ENCODE measurements at regions of chr1 and their contacts with region 1.

Region 1: DNA sequence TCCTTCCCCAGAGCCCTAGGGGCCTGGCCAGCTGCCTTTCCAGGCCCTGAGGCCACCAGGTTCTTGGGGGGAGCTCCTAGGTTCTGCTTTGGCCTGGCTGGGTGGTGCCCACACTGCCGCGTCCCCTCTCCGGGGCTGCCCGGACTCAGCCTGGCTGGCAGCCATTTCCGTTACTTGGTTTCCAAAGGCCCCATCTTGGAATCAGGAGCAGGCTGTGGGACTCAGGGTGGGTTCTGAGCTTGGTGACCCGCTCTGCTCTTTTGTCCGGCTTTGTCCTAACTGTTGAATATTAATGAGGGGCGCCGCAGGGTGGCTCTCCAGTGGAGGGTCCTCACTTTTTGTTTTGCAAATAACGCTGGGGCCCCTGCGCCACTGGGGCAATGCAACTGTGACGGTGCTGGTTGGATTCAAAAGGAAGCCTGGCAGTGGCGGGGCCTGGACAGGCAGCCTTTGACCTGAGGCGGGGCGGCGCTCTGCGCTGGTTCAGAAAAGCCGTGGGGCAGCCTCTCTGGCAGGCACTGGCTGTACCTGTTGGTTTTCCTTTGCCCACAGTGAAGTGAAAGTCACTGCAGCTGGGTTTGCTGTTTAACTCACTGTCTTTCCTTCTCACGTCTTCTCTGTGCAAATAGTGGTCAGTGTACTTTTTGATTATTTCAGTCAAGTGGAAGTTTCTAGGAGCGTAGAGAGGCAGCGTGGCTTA is 20.2 kb downstream of the SKI start:
- H3K4me3 Mint-ChIP-seq: no peak overlapping the region
- H3K27ac Mint-ChIP-seq: peak overlapping the region; percentile 13
- H3K4me1 Mint-ChIP-seq: peaks cover 94% of the 10 kb centered on the region
- H3K27me3 Mint-ChIP-seq: no peaks in the 10 kb centered on the region

Region 2: DNA sequence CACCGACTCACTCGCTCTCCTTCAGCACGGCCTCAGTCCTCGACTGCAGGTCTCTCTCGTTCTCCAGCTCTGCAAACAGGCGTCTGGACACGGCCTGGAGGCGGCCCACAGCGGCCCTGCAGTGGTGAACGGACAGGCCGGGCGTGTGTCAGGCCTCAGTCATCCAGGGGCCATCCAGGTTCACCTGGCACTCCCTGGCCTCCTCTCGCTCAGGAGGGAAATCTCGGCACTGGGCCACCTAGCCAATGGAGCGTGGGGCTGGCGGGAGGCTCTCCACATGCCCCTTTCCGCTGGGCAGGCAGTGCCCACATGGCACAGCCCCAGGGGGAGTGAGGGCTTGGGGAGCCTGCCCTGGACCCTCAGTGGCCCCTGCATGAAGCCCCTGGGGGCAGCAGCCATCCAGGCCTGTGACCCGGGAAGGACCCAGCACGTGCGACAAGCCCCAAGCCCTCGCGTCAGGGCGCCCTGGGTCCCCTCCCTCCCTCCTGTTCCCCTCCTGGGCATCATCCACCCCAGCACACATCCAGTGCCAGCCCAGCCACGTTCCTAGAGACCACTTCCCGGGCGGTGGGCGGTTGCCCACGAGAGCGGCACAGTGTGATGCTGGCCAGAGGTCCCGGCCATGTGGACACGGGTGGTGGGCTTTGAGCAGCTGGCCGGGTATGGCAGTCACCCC is 262.8 kb before region 1 on chr1:
- intact Hi-C with region 1: no loop called
- H3K4me3 Mint-ChIP-seq: no peak overlapping the region
- H3K27ac Mint-ChIP-seq: no peak overlapping the region
- H3K4me1 Mint-ChIP-seq: no peaks in the 10 kb centered on the region
- H3K27me3 Mint-ChIP-seq: peaks cover 14% of the 10 kb centered on the region

Region 3: GRCh38 chr1:2290595-2291510 is 42.6 kb after region 1 on chr1:
- intact Hi-C with region 1: loop called (anchors 5 kb)
- H3K4me3 Mint-ChIP-seq: peak overlapping the region; percentile 71
- H3K27ac Mint-ChIP-seq: peak overlapping the region; percentile 96
- H3K4me1 Mint-ChIP-seq: peaks cover 100% of the 10 kb centered on the region
- H3K27me3 Mint-ChIP-seq: peaks cover 15% of the 10 kb centered on the region

Measured in dendritic cell treated with granulocyte-macrophage colony-stimulating factor and Interleukin-4, amounts not matched to agents 40 ng/mL and 50 ng/mL, for 4 days (primary cell).